Activated naive CD4-positive, alpha-beta T cell treated with anti-CD3 and anti-CD28 coated beads, Interleukin-2, amount 10 ng/mL, durations not matched to agents 7 days and 5 days (primary cell): ENCODE measurements at regions of chr5 and their contacts with region 1.

Region 1: DNA sequence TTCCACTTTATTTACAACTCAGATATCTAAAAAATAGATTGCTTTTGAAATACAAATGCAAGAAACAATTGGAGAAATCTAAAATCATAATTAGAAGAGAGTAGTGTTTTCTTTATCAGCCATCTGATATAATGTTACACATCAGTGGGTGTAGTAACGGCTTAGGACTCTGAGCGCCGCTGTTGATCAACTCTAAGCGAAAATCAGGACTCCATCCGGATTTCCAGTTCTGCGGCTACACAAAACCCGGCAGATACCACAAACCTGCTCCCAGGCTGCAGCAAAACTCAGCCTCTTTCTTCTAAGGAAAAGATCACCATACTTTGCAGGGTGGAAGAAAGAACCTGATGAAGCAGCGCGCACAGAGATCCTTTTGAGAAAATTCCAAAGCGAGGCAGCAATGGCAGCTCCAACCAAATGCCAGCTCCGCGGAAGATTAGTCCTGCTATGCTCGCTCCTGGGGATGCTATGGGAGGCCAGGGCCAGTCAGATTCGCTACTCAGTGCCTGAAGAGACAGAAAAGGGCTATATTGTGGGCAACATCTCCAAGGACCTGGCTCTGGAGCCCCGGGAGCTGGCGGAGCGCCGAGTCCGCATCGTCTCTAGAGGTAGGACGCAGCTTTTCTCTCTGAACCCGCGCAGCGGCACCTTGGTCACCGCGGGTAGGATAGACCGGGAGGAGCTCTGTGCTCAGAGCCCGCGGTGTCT is at the start of gene PCDHGA9:
- DNase-seq: peak; percentile 46
- H3K4me3 Mint-ChIP-seq: no peak within 1 kb of the TSS
- H3K27ac Mint-ChIP-seq: no peak within 1 kb of the TSS
- H3K4me1 Mint-ChIP-seq: peaks cover 3% of the 10 kb centered on the region
- H3K27me3 Mint-ChIP-seq: peaks cover 60% of the 10 kb centered on the region

Region 2: DNA sequence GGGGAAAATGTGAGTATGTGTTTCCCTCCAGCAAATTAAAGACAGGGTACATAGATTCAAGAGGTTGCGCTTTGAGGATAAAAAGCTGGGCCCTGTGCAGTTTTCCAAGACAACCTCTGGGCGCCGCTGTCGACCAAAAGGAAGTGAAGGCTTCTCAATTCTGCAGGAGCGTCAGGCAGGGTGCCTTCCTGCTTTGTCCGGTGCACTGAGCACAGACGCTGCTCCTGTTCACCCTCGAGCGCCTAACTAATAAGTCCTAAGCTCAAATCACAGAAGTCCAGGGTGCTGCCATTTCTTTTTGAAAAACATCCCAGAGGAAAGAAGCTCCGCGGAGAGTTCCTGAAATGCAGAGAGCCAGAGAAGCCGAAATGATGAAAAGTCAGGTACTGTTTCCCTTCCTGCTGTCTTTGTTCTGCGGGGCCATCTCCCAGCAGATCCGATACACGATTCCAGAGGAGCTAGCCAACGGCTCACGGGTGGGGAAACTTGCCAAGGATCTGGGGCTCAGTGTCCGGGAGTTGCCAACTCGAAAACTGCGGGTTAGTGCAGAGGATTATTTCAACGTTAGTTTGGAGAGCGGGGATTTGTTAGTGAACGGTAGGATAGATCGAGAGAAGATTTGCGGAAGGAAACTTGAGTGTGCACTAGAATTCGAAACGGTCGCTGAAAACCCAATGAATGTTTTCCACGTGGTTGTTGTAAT is 52.6 kb before region 1 on chr5 and contains the start of gene PCDHGB1:
- CTCF ChIA-PET with region 1: no interaction called
- DNase-seq: peak; percentile 54
- H3K4me3 Mint-ChIP-seq: peak within 1 kb of the TSS; percentile 47
- H3K27ac Mint-ChIP-seq: no peak within 1 kb of the TSS
- H3K4me1 Mint-ChIP-seq: no peaks in the 10 kb centered on the region
- H3K27me3 Mint-ChIP-seq: peaks cover 41% of the 10 kb centered on the region

Region 3: DNA sequence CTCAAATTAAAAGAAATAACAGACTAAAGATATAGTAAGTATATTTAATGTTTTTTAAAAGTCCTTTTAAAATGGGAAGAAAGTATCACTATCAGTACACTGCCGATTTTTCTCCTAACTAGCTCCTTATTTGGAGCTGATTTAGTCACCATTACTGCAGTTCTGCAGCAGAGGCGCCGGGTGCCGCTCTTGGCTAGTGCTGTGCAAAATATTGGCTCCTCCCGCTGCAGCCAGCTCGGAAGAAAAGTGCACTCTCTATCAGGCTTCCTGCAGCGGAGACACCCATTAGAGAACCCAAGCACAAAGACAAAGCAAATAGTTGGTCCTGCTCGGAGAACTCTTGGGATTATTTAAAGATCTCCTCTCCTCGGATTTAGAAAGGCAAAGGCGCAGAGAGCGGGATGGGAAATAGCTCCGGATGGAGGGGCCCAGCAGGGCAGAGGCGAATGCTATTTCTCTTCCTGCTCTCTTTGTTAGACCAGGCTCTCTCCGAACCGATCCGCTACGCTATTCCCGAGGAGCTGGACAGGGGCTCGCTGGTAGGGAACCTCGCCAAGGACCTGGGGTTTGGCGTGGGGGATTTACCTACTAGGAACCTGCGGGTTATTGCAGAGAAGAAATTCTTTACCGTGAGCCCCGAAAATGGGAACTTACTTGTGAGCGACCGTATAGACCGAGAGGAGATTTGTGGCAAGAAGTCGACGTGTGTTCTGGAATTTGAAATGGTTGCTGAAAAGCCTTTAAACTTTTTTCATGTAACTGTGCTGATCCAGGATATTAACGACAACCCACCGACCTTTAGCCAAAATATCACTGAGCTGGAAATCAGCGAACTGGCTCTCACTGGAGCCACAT is 32.5 kb before region 1 on chr5 and contains the start of gene PCDHGB3:
- CTCF ChIA-PET with region 1: interaction called, 12 read pairs
- DNase-seq: peak; percentile 53
- H3K4me3 Mint-ChIP-seq: peak within 1 kb of the TSS; percentile 62
- H3K27ac Mint-ChIP-seq: no peak within 1 kb of the TSS
- H3K4me1 Mint-ChIP-seq: peaks cover 4% of the 10 kb centered on the region
- H3K27me3 Mint-ChIP-seq: peaks cover 74% of the 10 kb centered on the region

Region 4: GRCh38 chr5:141412854-141413539 is 10.3 kb after region 1 on chr5 and contains the start of gene PCDHGA10:
- CTCF ChIA-PET with region 1: interaction called, 11 read pairs
- DNase-seq: peak; percentile 72
- H3K4me3 Mint-ChIP-seq: peak within 1 kb of the TSS; percentile 78
- H3K27ac Mint-ChIP-seq: peak within 1 kb of the TSS; percentile 74
- H3K4me1 Mint-ChIP-seq: peaks cover 21% of the 10 kb centered on the region
- H3K27me3 Mint-ChIP-seq: peaks cover 79% of the 10 kb centered on the region

Region 5: DNA sequence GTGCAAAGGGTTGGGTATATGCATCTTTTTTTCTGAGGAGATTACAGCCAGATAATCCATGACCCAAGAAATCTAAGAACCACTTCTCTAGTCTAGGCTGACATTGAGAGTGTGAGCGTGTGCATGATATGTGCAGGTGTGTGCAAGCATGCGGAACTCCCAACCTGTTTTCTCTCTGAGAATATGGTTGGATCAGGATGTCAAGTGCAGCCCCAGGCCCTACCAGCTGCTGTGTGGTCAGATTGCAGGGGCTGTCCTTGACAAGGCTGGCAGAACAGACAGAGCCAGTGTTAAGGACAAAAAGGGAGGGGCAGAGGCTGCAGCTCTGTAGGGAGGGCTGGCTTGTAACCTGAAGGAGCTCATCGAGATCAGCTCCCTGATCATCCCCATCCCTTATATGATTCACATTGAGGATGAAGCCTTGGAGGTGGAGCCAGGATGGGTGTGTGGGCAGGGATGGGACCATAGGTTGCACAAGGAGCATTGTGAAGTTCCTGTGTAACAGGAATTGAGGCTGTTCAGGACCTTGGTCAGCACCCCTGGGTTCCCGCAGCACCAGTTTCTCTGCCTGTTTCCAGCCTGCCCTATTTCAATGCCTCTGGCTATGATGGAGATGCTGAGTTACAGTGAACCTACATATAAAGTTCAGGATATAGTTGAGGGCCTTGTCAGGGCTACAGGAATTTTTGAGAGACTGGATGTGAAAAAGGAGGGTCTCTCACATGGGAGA is 332.0 kb after region 1 on chr5:
- CTCF ChIA-PET with region 1: no interaction called
- DNase-seq: peak; percentile 70
- H3K4me3 Mint-ChIP-seq: no peak overlapping the region
- H3K27ac Mint-ChIP-seq: no peak overlapping the region
- H3K4me1 Mint-ChIP-seq: no peaks in the 10 kb centered on the region
- H3K27me3 Mint-ChIP-seq: peaks cover 44% of the 10 kb centered on the region